ENCODE measurements at regions of chr16 and their contacts with region 1.

Region 1: GRCh38 chr16:28863929-28864793 is 518 bp downstream of the SH2B1 start:
- DNase-seq: peak; percentile 52
- H3K4me3 ChIP-seq: peak overlapping the region; percentile 46 to 90 (median 83)
- H3K27ac ChIP-seq: peak overlapping the region; percentile 96
- H3K4me1 ChIP-seq: peaks cover 8% of the 10 kb centered on the region
- H3K27me3 ChIP-seq: no peaks in the 10 kb centered on the region
- CTCF ChIP-seq: no peak
- POLR2A ChIP-seq: no peak

Region 2: GRCh38 chr16:28823872-28824716 is 40.1 kb before region 1 on chr16:
- CTCF ChIA-PET with region 1: interaction called, 4 read pairs
- POLR2A ChIA-PET with region 1: interaction called, 3 read pairs
- dilution Hi-C with region 1: no loop called
- intact Hi-C with region 1: loop called (anchors 1 kb)
- DNase-seq: peak; percentile 99
- H3K4me3 ChIP-seq: peak overlapping the region; percentile 38 to 93 (median 77)
- H3K27ac ChIP-seq: peak overlapping the region; percentile 67
- H3K4me1 ChIP-seq: peaks cover 16% of the 10 kb centered on the region
- H3K27me3 ChIP-seq: no peaks in the 10 kb centered on the region
- CTCF ChIP-seq: peak in 1 of 2 donors; percentile 28
- POLR2A ChIP-seq: peak; percentile 75

Region 3: DNA sequence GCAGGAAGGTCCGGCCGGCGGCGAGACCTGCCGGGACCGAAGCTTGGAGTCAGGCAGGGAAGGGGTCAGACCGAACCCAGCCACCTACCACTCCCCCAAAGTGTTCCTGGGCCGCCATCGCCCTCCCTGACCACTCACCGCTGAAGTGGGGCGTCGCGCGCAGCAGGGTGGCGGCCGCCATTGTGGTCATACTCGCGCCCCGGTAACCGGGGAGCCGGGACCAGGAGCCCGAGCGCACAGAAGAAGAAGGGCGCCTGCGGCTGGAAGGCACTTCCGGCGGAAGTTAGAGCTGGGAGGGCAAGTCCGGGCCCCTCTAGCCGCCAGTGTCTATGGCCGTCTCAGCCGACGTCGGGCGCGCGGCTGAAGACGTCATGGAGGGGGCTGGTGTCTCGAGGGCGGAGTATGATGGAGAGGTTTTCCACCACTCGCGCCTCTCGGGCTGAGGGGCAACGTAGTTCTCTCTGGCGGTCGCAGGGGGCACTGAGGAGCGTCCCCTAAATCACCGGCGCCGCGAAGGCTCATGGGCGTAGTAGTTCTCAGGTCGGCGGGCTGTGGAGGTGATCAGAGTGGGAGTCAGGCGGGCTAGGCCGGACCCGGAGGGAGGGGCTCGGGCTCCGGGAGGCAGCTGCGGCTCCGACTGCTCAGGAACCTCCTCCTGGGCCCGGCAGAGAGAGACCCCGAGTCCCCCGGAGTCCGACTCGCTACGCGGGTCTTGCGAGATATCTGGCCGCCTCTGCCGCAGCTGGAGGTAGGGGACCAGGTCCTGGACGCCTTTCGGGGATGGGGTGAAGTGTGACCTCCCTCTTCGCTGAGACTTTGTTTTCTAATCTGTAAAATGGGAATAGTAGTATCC is 17.9 kb before region 1 on chr16 and contains the start of gene TUFM:
- CTCF ChIA-PET with region 1: interaction called, 13 read pairs
- POLR2A ChIA-PET with region 1: interaction called, 7 read pairs
- dilution Hi-C with region 1: no loop called
- intact Hi-C with region 1: loop called (anchors 1 kb)
- DNase-seq: peak; percentile 99
- H3K4me3 ChIP-seq: peak within 1 kb of the TSS; percentile 54 to 84 (median 67)
- H3K27ac ChIP-seq: peak within 1 kb of the TSS; percentile 42
- H3K4me1 ChIP-seq: peaks cover 13% of the 10 kb centered on the region
- H3K27me3 ChIP-seq: no peaks in the 10 kb centered on the region
- CTCF ChIP-seq: peak; percentile 70 to 83
- POLR2A ChIP-seq: peak; percentile 87
- total RNA-seq, gene TUFM: 186 and 190 TPM in 2 replicates